Activated CD4-positive, alpha-beta memory T cell treated with anti-CD3 and anti-CD28 coated beads for 36 hours (primary cell): ENCODE measurements at regions of chr13 and their contacts with region 1.

Region 1: GRCh38 chr13:42497798-42498197 is 76.2 kb upstream of the TNFSF11 start:
- DNase-seq: peak; percentile 65
- H3K4me3 Mint-ChIP-seq: peak overlapping the region; percentile 12
- H3K27ac Mint-ChIP-seq: peak overlapping the region; percentile 86
- H3K4me1 Mint-ChIP-seq: peaks cover 54% of the 10 kb centered on the region
- H3K27me3 Mint-ChIP-seq: no peaks in the 10 kb centered on the region

Region 2: GRCh38 chr13:40798380-40798779 is 1699.4 kb before region 1 on chr13:
- CTCF ChIA-PET with region 1: no interaction called
- POLR2A ChIA-PET with region 1: no interaction called
- intact Hi-C with region 1: no loop called
- DNase-seq: no peak
- H3K4me3 Mint-ChIP-seq: no peak overlapping the region
- H3K27ac Mint-ChIP-seq: peak overlapping the region; percentile 45
- H3K4me1 Mint-ChIP-seq: peaks cover 4% of the 10 kb centered on the region
- H3K27me3 Mint-ChIP-seq: no peaks in the 10 kb centered on the region

Region 3: DNA sequence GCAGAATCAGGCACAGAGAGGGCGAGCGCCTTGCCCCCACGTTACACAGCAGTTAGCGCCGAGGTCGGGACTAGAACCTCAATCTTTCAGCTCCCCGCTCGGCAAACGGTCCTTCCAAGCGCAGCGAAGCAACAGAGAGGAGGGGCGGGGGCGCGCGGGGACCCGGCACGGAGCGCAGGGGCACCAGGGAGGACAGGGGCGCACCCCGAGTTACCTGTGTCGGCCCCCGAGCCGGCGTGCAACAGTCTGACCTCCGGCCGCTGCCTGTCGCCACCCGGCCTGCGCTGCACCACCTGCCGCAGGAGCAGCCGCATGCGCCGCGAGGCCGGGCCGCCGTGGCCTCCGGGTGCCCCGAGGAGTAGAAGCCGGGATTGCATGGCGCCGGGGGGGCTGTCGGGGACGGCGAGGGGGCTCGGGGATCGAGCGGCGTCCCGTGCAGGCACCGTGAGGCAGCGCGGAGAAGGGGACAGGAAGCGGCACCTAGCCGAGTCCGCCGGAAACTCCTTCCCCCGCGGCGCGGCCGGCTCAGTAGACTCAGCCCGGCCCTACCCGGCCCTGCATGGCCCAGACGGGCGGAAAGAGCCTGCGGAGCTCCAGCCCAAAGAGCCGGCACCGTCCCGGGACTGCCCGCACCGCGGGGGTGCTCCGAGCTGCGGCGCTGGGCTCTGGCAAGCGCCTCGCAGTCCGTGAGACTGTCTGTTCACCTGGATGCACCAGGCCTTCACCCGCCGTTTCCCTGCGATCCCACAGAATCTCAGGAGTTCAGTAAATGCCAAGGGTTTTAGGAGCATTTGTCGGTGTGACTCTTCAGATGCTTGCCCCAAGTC is 536.9 kb before region 1 on chr13 and contains the start of gene VWA8:
- CTCF ChIA-PET with region 1: no interaction called
- POLR2A ChIA-PET with region 1: no interaction called
- intact Hi-C with region 1: loop called (anchors 5 kb)
- DNase-seq: peak; percentile 89
- H3K4me3 Mint-ChIP-seq: peak within 1 kb of the TSS; percentile 90
- H3K27ac Mint-ChIP-seq: peak within 1 kb of the TSS; percentile 97
- H3K4me1 Mint-ChIP-seq: peaks cover 52% of the 10 kb centered on the region
- H3K27me3 Mint-ChIP-seq: no peaks in the 10 kb centered on the region
- total RNA-seq, gene VWA8: 16.8 to 17.1 TPM

Region 4: GRCh38 chr13:42333613-42334328 is 164.0 kb before region 1 on chr13:
- CTCF ChIA-PET with region 1: interaction called, 5 read pairs
- POLR2A ChIA-PET with region 1: no interaction called
- intact Hi-C with region 1: loop called (anchors 1 kb)
- DNase-seq: no peak
- H3K4me3 Mint-ChIP-seq: no peak overlapping the region
- H3K27ac Mint-ChIP-seq: peak overlapping the region; percentile 64
- H3K4me1 Mint-ChIP-seq: peaks cover 32% of the 10 kb centered on the region
- H3K27me3 Mint-ChIP-seq: no peaks in the 10 kb centered on the region

Region 5: GRCh38 chr13:42392716-42393572 is 104.9 kb before region 1 on chr13:
- CTCF ChIA-PET with region 1: interaction called, 3 read pairs
- POLR2A ChIA-PET with region 1: interaction called, 34 read pairs
- intact Hi-C with region 1: loop called (anchors 1 kb)
- DNase-seq: peak; percentile 68
- H3K4me3 Mint-ChIP-seq: peak overlapping the region; percentile 96
- H3K27ac Mint-ChIP-seq: peak overlapping the region; percentile 100
- H3K4me1 Mint-ChIP-seq: peaks cover 79% of the 10 kb centered on the region
- H3K27me3 Mint-ChIP-seq: no peaks in the 10 kb centered on the region

Region 6: DNA sequence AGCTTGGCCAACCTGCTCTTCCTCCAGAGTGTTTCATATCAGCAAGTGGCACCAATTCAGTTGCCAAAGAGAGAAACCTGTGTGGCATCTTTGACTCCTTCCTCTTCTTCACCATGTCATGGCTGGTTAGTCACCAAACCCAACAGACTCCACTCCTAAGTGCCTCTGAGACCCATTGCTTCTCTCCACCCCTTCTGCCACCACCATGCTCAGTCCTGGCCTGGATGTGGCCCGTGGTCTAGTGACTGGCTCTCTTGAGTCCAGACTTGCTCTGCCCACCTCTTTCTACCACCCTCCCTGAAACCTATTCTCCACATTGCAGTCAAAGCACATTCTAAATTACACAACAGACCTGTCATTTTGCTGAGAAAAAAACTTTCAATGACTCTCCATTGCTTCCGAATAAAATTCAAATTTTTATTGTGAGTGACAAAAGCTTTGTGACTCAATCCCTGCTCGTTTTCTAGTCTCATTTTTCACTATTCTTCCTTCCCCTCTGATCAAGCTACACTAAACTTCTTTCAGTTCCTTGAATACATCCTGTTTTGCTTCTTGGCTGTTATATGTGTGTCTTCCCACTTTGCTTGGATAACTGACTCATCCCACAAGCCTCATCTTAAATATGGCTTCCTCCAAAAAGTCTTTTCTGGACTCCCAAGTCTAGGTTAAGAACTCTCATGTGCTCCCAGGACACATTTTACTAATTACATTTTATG is 64.1 kb after region 1 on chr13:
- CTCF ChIA-PET with region 1: interaction called, 3 read pairs
- POLR2A ChIA-PET with region 1: no interaction called
- intact Hi-C with region 1: loop called (anchors 2 kb)
- DNase-seq: peak; percentile 70
- H3K4me3 Mint-ChIP-seq: no peak overlapping the region
- H3K27ac Mint-ChIP-seq: peak overlapping the region; percentile 66
- H3K4me1 Mint-ChIP-seq: peaks cover 20% of the 10 kb centered on the region
- H3K27me3 Mint-ChIP-seq: no peaks in the 10 kb centered on the region

Region 7: DNA sequence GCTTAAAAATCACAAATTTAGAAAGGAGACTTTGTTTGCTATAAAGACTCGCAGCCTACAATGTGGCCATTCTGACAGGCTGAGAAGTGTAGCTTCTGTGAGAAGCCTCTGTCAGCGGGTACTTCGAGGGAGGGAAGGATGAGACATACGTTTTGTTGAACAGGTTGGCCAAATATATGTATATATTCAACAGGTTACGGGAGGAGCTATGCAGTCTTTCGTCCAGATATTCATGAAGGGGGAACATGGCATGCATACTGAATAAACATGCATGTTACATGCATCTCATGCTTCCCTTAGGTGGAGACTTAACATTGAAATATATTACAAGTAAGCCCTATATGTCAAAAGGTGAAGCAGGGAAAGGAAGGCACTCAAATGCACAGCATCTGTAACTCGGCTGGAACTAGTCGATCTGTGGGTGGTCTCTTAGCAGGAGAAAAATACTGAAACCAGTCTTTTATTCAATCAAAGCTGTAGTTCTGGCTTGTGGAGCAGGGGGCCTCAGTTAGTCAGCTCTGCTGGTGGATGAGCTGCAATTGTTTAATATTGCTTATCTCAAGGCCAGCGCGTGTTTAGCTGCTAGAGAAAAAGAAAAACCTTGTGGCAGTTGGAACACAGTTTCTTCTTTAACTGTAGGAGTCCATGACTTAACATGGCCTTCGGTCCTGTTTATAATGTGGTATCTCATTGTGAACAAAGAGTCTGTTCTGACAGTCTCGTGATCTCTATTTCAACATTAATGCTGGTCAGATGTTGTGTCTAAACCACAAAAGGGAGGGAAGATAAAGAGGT is 377.9 kb after region 1 on chr13:
- CTCF ChIA-PET with region 1: no interaction called
- POLR2A ChIA-PET with region 1: no interaction called
- intact Hi-C with region 1: loop called (anchors 5 kb)
- DNase-seq: peak; percentile 9
- H3K4me3 Mint-ChIP-seq: no peak overlapping the region
- H3K27ac Mint-ChIP-seq: no peak overlapping the region
- H3K4me1 Mint-ChIP-seq: peaks cover 19% of the 10 kb centered on the region
- H3K27me3 Mint-ChIP-seq: peaks cover 5% of the 10 kb centered on the region

Region 8: DNA sequence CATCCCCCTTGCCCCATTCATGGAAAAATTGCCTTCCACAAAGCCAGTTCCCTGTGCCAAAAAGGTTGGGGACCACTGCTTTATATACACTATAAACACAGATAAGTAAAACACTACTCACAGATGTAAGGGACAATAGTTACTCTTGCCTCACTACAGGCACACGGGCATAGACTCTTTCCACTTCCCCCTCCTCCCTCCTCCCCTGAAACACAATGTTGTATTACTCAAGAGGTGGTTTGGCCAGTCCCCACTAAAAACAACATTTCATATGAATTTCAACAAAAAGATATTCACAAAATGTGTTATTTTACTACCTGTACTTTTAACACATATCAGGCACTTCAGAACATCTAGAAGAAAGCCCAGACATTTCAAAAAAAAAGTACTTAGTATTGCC is 449.1 kb after region 1 on chr13:
- CTCF ChIA-PET with region 1: no interaction called
- POLR2A ChIA-PET with region 1: no interaction called
- intact Hi-C with region 1: no loop called
- DNase-seq: no peak
- H3K4me3 Mint-ChIP-seq: no peak overlapping the region
- H3K27ac Mint-ChIP-seq: no peak overlapping the region
- H3K4me1 Mint-ChIP-seq: no peaks in the 10 kb centered on the region
- H3K27me3 Mint-ChIP-seq: no peaks in the 10 kb centered on the region

Region 9: DNA sequence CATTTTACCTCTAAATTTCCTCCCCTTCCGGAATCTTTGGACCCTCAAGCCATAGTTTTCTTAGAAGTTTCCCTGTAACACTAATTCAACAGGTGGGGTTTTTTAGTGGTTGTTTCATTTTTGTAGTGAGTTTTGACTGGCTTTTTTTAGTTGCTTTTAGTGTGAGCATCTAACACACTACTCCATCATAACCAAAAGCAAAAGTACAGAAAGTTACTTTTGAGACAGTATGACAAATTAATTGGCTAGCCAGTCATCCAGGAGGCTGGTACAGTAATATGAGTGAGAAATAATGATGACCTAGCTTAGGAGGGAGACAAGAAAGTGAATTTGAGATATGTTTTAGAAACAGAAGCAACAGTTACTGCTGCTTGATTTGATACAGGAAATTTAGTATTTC is 597.1 kb after region 1 on chr13:
- CTCF ChIA-PET with region 1: no interaction called
- POLR2A ChIA-PET with region 1: no interaction called
- intact Hi-C with region 1: loop called (anchors 10 kb)
- DNase-seq: no peak
- H3K4me3 Mint-ChIP-seq: no peak overlapping the region
- H3K27ac Mint-ChIP-seq: peak overlapping the region; percentile 40
- H3K4me1 Mint-ChIP-seq: peaks cover 22% of the 10 kb centered on the region
- H3K27me3 Mint-ChIP-seq: no peaks in the 10 kb centered on the region